ENCODE measurements at regions of chr12 and their contacts with region 1.

Region 1: DNA sequence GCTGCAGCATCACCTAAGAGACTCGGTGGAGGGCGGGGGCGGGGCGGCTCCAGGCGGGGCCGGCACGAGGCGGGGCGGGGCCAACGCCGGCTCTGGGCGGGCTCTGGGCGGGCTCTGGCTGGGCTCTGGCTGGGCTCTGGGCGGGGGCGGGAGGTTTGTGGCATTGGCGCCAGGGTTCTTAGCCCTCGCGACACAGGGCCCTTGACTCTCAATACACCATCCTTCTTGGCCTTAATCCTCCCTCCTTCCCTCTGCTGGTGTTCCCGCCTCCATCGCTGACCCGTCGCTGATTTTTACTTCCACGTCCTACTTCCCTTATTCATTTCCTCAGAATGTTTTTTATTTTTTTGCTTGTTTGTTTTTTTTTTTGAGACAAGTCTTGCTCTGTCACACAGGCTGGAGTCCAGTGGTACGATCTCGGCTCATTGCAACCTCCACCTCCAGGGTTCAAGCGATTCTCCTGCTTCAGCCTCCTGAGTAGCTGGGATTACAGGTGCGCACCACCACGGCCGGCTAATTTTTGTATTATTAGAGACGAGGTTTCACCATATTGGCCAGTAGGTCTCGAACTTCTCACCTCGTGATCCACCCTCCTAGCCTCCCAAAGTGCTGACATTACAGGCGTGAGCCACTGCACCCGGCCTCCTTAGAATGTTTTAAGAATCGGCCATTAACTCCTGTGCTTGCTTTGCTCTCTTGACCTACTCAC is at the start of gene BLTP3B:
- DNase-seq: peak; percentile 70 to 91 (median 84)
- ATAC-seq: peak; percentile 98
- H3K4me3 ChIP-seq: peak within 1 kb of the TSS; percentile 84
- H3K4me3 Mint-ChIP-seq: peak within 1 kb of the TSS; percentile 86 to 97 (median 95)
- H3K27ac ChIP-seq: peak within 1 kb of the TSS; percentile 93
- H3K27ac Mint-ChIP-seq: peak within 1 kb of the TSS; percentile 85 to 98 (median 94)
- H3K4me1 ChIP-seq: peaks cover 7 to 14% of the 10 kb centered on the region in 2 donors
- H3K4me1 Mint-ChIP-seq: peaks cover 31 to 46% (median 33%) of the 10 kb centered on the region in 7 donors
- H3K27me3 ChIP-seq: no peaks in the 10 kb centered on the region
- H3K27me3 Mint-ChIP-seq: no peaks in the 10 kb centered on the region
- total RNA-seq, gene BLTP3B: 13.1 to 28.9 (median 18.0) TPM

Region 2: DNA sequence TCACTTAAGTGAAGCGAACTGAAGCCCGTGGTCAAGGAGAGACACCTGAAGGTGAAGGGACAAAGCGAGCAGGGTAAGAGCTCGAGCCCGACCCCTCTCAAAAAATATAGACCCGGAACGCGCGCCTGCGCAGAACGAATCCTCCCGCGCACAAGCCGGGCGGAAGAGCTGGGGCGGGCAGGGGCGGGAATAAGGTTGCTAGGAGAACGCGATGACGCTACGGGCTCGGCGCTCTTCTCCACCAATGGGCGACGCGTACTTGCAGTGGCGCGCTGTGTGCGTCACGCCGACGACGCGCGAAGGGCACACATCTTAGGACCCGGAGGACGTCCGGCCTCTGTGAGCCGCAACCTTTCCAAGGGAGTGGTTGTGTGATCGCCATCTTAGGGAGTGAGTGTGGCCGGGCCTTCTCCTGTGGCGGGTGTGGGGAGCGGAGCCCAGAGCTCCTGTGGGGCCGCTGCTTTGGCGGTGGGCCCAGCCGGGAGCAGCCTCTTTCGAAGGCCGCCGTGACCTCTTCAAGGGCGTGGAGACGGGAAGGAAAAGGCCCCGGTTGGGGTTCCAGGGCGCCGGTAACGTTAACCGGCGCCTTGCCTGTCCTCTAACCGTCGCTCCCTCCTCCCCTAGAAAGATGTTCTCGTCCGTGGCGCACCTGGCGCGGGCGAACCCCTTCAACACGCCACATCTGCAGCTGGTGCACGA is 1549.5 kb before region 1 on chr12 and contains the start of gene SLC25A3:
- CTCF ChIA-PET with region 1: no interaction called
- POLR2A ChIA-PET with region 1: no interaction called
- intact Hi-C with region 1: loop called in 1 of 2 experiments (anchors 2 kb)
- DNase-seq: peak; percentile 79 to 96 (median 92)
- ATAC-seq: peak; percentile 98
- H3K4me3 ChIP-seq: peak within 1 kb of the TSS; percentile 80
- H3K4me3 Mint-ChIP-seq: peak within 1 kb of the TSS; percentile 88 to 99 (median 96)
- H3K27ac ChIP-seq: peak within 1 kb of the TSS; percentile 95
- H3K27ac Mint-ChIP-seq: peak within 1 kb of the TSS; percentile 98 to 100 (median 99)
- H3K4me1 ChIP-seq: peaks cover 17 to 22% of the 10 kb centered on the region in 2 donors
- H3K4me1 Mint-ChIP-seq: peaks cover 20 to 48% (median 36%) of the 10 kb centered on the region in 7 donors
- H3K27me3 ChIP-seq: no peaks in the 10 kb centered on the region
- H3K27me3 Mint-ChIP-seq: peaks cover 0 to 2% (median 0%) of the 10 kb centered on the region in 5 donors
- total RNA-seq, gene SLC25A3: 234 to 448 (median 353) TPM

Region 3: DNA sequence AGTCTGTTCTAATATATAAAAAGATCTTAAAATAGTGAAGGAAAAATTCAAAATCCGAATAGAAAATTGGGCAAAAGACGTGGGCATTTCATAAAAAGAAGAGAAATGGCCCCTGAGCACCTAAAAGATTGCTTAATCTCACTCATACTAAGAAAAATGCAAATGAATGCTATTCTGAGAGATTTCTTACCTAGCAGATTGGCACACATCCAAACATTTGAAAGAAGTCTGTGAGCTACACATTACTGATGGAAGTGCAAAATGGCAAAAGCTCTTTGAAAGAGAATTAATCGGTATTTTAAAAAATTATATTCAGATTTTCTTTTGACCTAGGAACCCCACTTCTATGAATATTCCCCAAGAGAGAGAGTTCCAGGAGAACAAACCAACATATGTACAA is 775.8 kb before region 1 on chr12:
- CTCF ChIA-PET with region 1: no interaction called
- POLR2A ChIA-PET with region 1: no interaction called
- intact Hi-C with region 1: no loop called
- DNase-seq: no peak
- ATAC-seq: no peak
- H3K4me3 ChIP-seq: no peak overlapping the region
- H3K4me3 Mint-ChIP-seq: no peak overlapping the region
- H3K27ac ChIP-seq: no peak overlapping the region
- H3K27ac Mint-ChIP-seq: no peak overlapping the region
- H3K4me1 ChIP-seq: no peaks in the 10 kb centered on the region
- H3K4me1 Mint-ChIP-seq: no peaks in the 10 kb centered on the region
- H3K27me3 ChIP-seq: no peaks in the 10 kb centered on the region
- H3K27me3 Mint-ChIP-seq: no peaks in the 10 kb centered on the region

Region 4: GRCh38 chr12:99911081-99911480 is 231.9 kb before region 1 on chr12:
- CTCF ChIA-PET with region 1: no interaction called
- POLR2A ChIA-PET with region 1: no interaction called
- intact Hi-C with region 1: no loop called
- DNase-seq: no peak
- ATAC-seq: no peak
- H3K4me3 ChIP-seq: no peak overlapping the region
- H3K4me3 Mint-ChIP-seq: no peak overlapping the region
- H3K27ac ChIP-seq: no peak overlapping the region
- H3K27ac Mint-ChIP-seq: no peak overlapping the region
- H3K4me1 ChIP-seq: no peaks in the 10 kb centered on the region
- H3K4me1 Mint-ChIP-seq: no peaks in the 10 kb centered on the region
- H3K27me3 ChIP-seq: no peaks in the 10 kb centered on the region
- H3K27me3 Mint-ChIP-seq: peaks cover 0 to 12% (median 0%) of the 10 kb centered on the region in 5 donors

Region 5: DNA sequence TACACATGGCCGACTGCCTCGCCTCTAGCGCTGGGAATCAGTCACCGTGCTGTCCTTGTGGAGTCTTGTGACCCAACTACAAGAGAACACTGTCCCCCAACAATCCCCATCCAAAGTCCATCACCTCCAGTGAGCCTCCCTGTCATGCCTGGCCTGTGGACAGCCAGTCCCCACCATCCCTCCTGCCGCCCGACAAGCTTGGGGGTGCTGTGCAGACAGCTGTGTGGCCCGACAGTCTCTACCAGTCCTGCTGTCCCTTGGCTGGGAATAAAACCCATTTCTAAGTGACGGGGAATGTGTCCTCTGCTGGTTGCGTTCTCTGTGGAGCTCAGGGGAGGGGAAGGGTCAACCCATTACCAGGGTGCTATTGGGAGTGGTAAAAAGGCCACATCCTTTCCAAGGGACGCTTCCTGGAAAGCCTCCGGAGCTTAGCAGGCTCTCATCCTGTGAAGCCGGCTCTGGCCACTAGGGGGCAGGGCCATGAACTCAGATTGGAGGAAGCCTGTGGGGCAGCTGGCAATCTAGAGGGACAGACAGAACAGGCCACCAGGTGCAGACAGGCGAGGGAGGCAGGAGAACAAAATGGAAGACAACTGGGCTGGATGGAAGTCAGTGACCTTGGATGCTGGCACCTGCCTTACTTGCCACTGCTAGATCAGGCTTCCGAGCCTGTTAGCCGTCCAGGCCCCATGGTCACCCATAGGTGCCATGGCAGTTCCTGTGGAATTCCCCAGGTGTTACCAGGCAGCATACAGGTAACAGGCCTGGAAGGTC is 11.7 kb after region 1 on chr12:
- CTCF ChIA-PET with region 1: interaction called, 6 read pairs
- POLR2A ChIA-PET with region 1: no interaction called
- intact Hi-C with region 1: loop called (anchors 1 kb)
- DNase-seq: peak; percentile 28 to 78 (median 51)
- ATAC-seq: peak; percentile 77
- H3K4me3 ChIP-seq: no peak overlapping the region
- H3K4me3 Mint-ChIP-seq: no peak overlapping the region
- H3K27ac ChIP-seq: no peak overlapping the region
- H3K27ac Mint-ChIP-seq: peak overlapping the region in 1 of 9 donors; percentile 64
- H3K4me1 ChIP-seq: no peaks in the 10 kb centered on the region
- H3K4me1 Mint-ChIP-seq: peaks cover 0 to 11% (median 5%) of the 10 kb centered on the region in 7 donors
- H3K27me3 ChIP-seq: no peaks in the 10 kb centered on the region
- H3K27me3 Mint-ChIP-seq: no peaks in the 10 kb centered on the region

Region 6: DNA sequence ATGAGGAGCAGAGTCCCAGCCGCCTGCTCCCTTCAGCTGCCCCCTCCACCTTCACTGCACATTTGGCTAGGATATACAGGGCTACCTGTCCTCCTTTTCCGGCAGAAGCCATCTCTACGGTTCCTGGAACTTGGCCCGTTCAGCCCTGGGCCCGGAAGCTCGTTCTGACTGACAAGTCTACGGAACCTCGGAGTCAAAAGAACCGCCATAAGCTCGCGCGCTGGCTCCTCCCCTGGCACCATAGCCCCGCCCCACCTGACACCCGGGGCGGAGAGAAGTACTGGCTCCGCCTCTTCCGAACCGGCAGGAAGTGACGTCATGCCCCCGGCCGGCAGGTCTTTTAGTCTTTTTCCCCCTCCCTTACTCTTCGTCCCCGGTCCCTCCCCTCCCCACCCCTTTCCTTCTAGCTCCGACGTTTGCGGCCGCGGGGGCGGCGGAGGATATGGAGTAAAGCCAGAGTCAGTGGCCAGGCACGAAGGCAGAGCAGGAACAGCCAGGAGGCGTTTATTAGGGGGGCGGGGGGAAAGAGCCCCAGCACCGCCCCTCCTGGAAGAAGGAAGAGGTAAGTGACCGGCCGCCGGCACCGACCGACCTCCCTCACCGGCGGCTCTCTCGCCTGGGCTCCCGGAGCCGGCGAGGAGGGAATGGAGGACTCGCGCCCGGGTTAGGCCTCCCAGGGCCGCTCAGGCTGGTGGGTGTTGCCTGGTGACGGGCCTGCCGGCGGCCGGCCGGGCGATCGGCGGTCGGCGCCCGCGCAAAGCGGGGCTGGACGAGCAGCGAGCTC is 124.0 kb after region 1 on chr12 and contains the starts of genes DEPDC4 and SCYL2:
- CTCF ChIA-PET with region 1: no interaction called
- POLR2A ChIA-PET with region 1: no interaction called
- intact Hi-C with region 1: loop called (anchors 1 kb)
- DNase-seq: peak; percentile 94 to 99 (median 97)
- ATAC-seq: peak; percentile 95
- H3K4me3 ChIP-seq: peak within 1 kb of the TSS; percentile 98
- H3K4me3 Mint-ChIP-seq: peak within 1 kb of the TSS; percentile 94 to 100 (median 98)
- H3K27ac ChIP-seq: peak within 1 kb of the TSS; percentile 96
- H3K27ac Mint-ChIP-seq: peak within 1 kb of the TSS; percentile 89 to 100 (median 98)
- H3K4me1 ChIP-seq: peaks cover 11 to 19% of the 10 kb centered on the region in 2 donors
- H3K4me1 Mint-ChIP-seq: peaks cover 18 to 54% (median 33%) of the 10 kb centered on the region in 7 donors
- H3K27me3 ChIP-seq: no peaks in the 10 kb centered on the region
- H3K27me3 Mint-ChIP-seq: no peaks in the 10 kb centered on the region
- total RNA-seq, gene DEPDC4: 0.74 to 1.3 (median 0.92) TPM
- total RNA-seq, gene SCYL2: 32.6 to 49.4 (median 42.3) TPM

Region 7: DNA sequence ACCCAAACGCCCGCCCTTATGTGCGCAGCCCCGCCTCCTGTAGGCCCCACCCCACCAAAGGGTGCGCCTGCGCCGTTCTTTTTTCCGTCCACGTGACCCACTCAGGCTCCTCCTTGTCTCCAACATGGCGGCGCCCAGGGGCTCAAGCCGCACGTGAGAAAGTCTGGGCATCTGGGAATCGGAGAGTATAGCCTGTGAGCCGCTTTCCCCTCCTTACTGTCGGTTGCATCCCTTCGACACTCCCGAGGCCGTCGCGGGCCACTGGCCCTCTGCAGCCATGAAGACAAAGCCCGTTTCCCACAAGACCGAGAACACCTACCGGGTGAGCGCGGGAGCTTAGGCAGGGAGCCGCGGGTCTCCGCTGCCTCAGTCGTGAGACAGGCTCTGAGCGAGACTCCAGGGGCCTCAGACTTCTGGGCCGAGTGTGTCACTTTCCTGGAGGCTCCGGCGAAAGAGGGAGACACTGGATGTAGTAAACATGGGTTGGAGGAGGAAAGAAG is 1137.1 kb after region 1 on chr12 and contains the start of gene UTP20:
- CTCF ChIA-PET with region 1: no interaction called
- POLR2A ChIA-PET with region 1: no interaction called
- intact Hi-C with region 1: loop called in 1 of 2 experiments (anchors 1 kb)
- DNase-seq: peak; percentile 90 to 94 (median 92)
- ATAC-seq: peak; percentile 100
- H3K4me3 ChIP-seq: peak within 1 kb of the TSS; percentile 72
- H3K4me3 Mint-ChIP-seq: peak within 1 kb of the TSS; percentile 92 to 97 (median 96)
- H3K27ac ChIP-seq: peak within 1 kb of the TSS; percentile 63
- H3K27ac Mint-ChIP-seq: peak within 1 kb of the TSS; percentile 77 to 94 (median 87)
- H3K4me1 ChIP-seq: peaks cover 5% of the 10 kb centered on the region in 2 donors
- H3K4me1 Mint-ChIP-seq: peaks cover 11 to 28% (median 16%) of the 10 kb centered on the region in 7 donors
- H3K27me3 ChIP-seq: no peaks in the 10 kb centered on the region
- H3K27me3 Mint-ChIP-seq: peaks cover 8 to 24% (median 16%) of the 10 kb centered on the region in 5 donors
- total RNA-seq, gene UTP20: 10.8 to 20.8 (median 14.9) TPM

Region 8: GRCh38 chr12:102119674-102120563 is 1976.9 kb after region 1 on chr12 and contains the starts of genes NUP37 and PARPBP:
- CTCF ChIA-PET with region 1: no interaction called
- POLR2A ChIA-PET with region 1: no interaction called
- intact Hi-C with region 1: loop called in 1 of 2 experiments (anchors 5 kb)
- DNase-seq: peak; percentile 87 to 94 (median 91)
- ATAC-seq: peak; percentile 98
- H3K4me3 ChIP-seq: peak within 1 kb of the TSS; percentile 93
- H3K4me3 Mint-ChIP-seq: peak within 1 kb of the TSS; percentile 88 to 98 (median 93)
- H3K27ac ChIP-seq: peak within 1 kb of the TSS; percentile 91
- H3K27ac Mint-ChIP-seq: peak within 1 kb of the TSS; percentile 86 to 97 (median 92)
- H3K4me1 ChIP-seq: peaks cover 9 to 14% of the 10 kb centered on the region in 2 donors
- H3K4me1 Mint-ChIP-seq: peaks cover 14 to 49% (median 27%) of the 10 kb centered on the region in 7 donors
- H3K27me3 ChIP-seq: no peaks in the 10 kb centered on the region
- H3K27me3 Mint-ChIP-seq: no peaks in the 10 kb centered on the region
- total RNA-seq, gene NUP37: 11.9 to 47.5 (median 18.5) TPM
- total RNA-seq, gene PARPBP: 1.1 to 21.5 (median 1.5) TPM

Measured in naive thymus-derived CD4-positive, alpha-beta T cell (primary cell).